ENCODE measurements at regions of chr3 and their contacts with region 1.

Region 1: DNA sequence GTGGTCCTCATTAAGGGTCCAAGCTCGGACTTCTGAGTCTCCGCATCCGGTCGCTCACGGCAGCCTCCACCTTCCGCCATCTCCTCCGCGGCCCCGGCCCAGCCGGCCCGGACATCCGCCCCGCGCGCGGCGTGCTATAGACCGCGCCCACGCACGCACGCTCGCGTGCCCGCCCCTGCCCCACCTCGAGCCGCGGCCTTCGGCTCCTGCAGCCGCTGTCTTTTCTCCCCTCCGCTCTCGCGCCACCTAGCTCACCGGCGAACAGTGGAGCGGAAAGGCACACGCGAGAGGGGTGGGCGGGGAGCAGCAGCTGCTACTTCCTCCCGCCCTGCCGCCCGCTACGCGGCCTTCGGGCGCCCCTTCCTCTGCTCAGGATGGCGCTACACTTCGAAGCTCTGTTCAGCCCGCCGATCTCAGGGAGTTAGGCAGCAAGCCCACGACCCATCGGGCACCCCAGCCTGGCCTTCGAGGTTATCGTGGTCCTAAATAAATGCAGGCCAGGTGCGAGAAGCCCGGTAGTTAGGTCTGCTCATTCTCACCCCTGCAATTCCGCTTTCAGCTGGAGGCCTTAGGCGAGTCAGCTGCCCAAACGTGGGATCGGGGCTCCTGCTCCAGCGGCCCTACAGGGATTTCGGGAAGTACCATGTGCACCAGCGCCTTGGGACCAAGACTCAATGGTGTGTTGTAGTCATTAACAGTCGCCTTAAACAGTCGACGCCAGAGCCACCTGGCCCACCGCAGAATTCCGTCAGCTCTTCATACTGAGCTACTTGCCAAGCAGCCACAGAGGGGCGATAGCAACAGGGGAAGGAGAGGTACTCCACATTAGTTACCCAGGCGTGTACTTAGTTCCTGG is at the start of gene USP4:
- DNase-seq: peak; percentile 77 to 83
- ATAC-seq: peak; percentile 85 to 89
- H3K4me3 ChIP-seq: peak within 1 kb of the TSS; percentile 76 to 86 (median 82)
- H3K27ac ChIP-seq: peak within 1 kb of the TSS; percentile 83 to 92 (median 90)
- H3K4me1 ChIP-seq: peaks cover 5 to 18% of the 10 kb centered on the region in 2 donors
- H3K27me3 ChIP-seq: no peaks in the 10 kb centered on the region
- CTCF ChIP-seq: peak; percentile 13 to 52 (median 35)
- POLR2A ChIP-seq: peak; percentile 61 to 62
- total RNA-seq, gene USP4: 7.2 to 10.2 (median 9.1) TPM

Region 2: DNA sequence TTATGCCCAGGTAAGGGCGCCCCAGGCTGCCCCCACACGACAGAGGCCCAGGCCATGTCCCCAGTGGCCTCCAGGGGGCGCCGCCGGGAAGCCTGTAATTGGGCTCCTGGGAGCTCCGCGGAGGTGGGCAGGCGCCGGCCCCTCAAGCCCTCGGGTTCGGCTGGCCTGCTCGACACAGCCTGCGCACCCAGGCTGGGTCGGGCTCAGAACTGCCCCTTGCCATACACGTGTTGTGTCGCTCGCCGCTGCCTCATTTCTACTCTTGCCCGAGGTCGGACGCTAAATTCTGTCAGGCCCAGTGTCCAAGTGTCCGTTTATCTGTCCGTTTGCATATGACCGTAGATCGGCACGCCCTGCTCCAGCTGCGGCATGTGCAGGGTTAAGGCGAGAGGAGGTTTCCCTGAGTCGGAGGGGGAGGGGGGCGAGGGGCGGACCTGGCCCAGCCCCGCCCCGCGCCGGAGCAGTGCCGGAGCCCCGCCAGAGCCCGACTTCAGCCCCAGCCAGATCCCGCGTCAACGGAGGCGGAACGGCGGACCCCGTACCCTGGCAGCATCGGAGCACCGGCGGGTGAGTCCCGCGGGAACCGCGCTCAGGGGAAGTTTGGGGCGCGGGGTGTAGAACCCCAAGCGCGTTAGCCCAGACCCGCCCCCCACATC is 168.9 kb before region 1 on chr3 and contains the start of gene KLHDC8B:
- in situ Hi-C with region 1: no loop called
- intact Hi-C with region 1: loop called (anchors 1 kb)
- DNase-seq: peak; percentile 67 to 82
- ATAC-seq: peak; percentile 80 to 83
- H3K4me3 ChIP-seq: peak within 1 kb of the TSS; percentile 59 to 90 (median 82)
- H3K27ac ChIP-seq: peak within 1 kb of the TSS; percentile 81 to 90 (median 88)
- H3K4me1 ChIP-seq: peaks cover 40 to 41% of the 10 kb centered on the region in 2 donors
- H3K27me3 ChIP-seq: no peaks in the 10 kb centered on the region
- CTCF ChIP-seq: peak; percentile 96 to 99 (median 97)
- POLR2A ChIP-seq: peak; percentile 53 to 54
- total RNA-seq, gene KLHDC8B: 15.8 to 35.8 (median 26.0) TPM

Region 3: DNA sequence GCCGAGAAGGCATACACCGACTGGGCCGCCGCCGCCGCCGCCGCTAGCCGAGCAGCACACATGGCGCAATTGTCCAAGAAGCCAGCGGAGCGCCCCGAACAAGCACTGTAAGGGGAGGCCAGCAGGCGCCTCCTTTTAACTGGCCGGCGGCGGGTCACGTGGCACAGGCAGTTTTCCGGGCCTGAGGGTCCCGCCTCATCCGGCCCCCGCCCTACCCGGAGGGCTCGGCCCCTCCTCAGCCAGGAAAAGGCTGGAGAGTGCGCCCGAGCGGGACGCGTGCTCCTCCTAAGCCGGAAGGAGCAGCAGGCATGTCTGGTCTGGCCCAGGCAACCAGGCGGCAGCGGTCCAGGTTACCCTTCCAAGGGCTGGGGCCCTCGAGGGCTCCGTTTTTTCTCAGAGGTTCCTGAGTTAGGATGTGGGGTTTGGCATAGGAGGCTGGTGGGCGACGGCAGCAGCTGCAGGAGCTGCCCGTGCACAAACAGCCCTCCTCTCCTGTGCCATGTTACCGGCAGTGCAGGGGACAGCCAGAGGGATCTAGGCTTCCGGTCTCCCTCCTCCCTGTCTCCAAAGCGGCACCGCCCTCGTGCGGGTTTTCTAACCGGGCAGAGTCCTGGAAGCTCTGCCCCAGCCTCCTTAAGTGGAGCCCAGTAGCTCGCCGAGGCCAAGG is 18.2 kb after region 1 on chr3 and contains the start of gene GPX1:
- in situ Hi-C with region 1: no loop called
- intact Hi-C with region 1: loop called (anchors 1 kb)
- DNase-seq: peak; percentile 85 to 93
- ATAC-seq: peak; percentile 84 to 89
- H3K4me3 ChIP-seq: peak within 1 kb of the TSS; percentile 73 to 77 (median 73)
- H3K27ac ChIP-seq: peak within 1 kb of the TSS; percentile 85 to 91 (median 86)
- H3K4me1 ChIP-seq: peaks cover 14 to 16% of the 10 kb centered on the region in 2 donors
- H3K27me3 ChIP-seq: no peaks in the 10 kb centered on the region
- CTCF ChIP-seq: no peak
- POLR2A ChIP-seq: peak; percentile 84 to 93
- total RNA-seq, gene GPX1: 75.2 to 157 (median 123) TPM

Region 4: DNA sequence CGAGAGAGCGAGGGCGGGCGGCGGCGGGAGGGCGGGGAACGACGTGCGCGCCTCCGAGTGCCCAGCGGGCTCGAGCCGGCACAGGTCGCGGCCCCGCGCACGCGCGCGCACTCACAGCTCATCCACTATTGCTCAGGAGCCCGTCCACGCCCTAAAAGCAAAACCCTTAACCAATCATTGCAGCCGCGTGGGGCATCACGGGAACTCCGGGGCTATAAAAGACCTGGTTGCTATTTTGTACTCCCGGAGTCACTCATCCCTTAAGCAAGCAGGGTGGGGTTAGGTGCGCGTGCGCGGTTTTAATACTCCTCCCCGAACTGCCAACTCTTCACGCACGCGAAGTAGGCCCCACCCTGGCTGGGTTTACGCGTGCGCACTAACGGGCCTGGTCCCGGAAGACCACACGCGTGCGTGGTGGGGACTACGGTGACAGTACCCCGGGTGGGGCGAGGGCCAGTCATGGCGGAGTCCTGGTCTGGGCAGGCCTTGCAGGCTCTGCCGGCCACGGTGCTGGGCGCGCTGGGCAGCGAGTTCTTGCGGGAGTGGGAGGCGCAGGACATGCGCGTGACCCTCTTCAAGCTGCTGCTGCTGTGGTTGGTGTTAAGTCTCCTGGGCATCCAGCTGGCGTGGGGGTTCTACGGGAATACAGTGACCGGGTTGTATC is 71.9 kb after region 1 on chr3 and contains the starts of genes RHOA and TCTA:
- in situ Hi-C with region 1: no loop called
- intact Hi-C with region 1: loop called (anchors 1 kb)
- DNase-seq: peak; percentile 100
- ATAC-seq: peak; percentile 93 to 96
- H3K4me3 ChIP-seq: peak within 1 kb of the TSS; percentile 74 to 97 (median 80)
- H3K27ac ChIP-seq: peak within 1 kb of the TSS; percentile 85 to 96 (median 92)
- H3K4me1 ChIP-seq: peaks cover 48 to 55% of the 10 kb centered on the region in 2 donors
- H3K27me3 ChIP-seq: no peaks in the 10 kb centered on the region
- CTCF ChIP-seq: peak in 1 of 5 experiments; percentile 24
- POLR2A ChIP-seq: peak; percentile 98 to 99
- total RNA-seq, gene RHOA: 244 to 411 (median 282) TPM
- total RNA-seq, gene TCTA: 12.0 to 25.8 (median 15.1) TPM

Region 5: GRCh38 chr3:49428697-49429100 is 88.5 kb after region 1 on chr3:
- in situ Hi-C with region 1: no loop called
- intact Hi-C with region 1: loop called (anchors 5 kb)
- DNase-seq: no peak
- ATAC-seq: peak in 1 of 2 donors; percentile 5
- H3K4me3 ChIP-seq: peak overlapping the region; percentile 64 to 86 (median 74)
- H3K27ac ChIP-seq: peak overlapping the region; percentile 82 to 93 (median 92)
- H3K4me1 ChIP-seq: peaks cover 7 to 12% of the 10 kb centered on the region in 2 donors
- H3K27me3 ChIP-seq: no peaks in the 10 kb centered on the region
- CTCF ChIP-seq: no peak
- POLR2A ChIP-seq: no peak

Region 6: DNA sequence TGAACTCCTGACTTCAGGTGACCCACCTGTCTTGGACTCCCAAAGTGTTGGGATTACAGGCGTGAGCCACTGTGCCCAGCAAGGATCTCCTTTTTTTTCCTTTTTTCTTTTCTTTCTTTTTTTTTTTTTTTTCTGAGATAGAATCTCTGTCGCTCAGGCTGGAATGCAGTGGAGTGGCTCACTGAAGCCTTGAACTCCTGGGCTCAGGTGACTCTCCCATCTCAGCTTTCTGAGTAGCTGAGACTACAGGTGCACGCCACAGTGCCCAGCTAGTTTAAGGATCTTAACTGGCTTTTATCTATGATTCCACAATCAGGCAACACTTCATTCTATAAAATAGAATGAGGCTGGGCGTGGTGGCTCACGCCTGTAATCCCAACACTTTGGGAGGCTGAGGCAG is 105.2 kb after region 1 on chr3:
- in situ Hi-C with region 1: loop called (anchors 5 to 10 kb)
- intact Hi-C with region 1: loop called (anchors 1 kb)
- DNase-seq: no peak
- ATAC-seq: no peak
- H3K4me3 ChIP-seq: no peak overlapping the region
- H3K27ac ChIP-seq: no peak overlapping the region
- H3K4me1 ChIP-seq: peaks cover 0 to 4% of the 10 kb centered on the region in 2 donors
- H3K27me3 ChIP-seq: no peaks in the 10 kb centered on the region
- CTCF ChIP-seq: no peak
- POLR2A ChIP-seq: no peak